Activated CD4-positive, alpha-beta T cell treated with anti-CD3 and anti-CD28 coated beads for 36 hours (primary cell): ENCODE measurements at regions of chr18 and their contacts with region 1.

Region 1: DNA sequence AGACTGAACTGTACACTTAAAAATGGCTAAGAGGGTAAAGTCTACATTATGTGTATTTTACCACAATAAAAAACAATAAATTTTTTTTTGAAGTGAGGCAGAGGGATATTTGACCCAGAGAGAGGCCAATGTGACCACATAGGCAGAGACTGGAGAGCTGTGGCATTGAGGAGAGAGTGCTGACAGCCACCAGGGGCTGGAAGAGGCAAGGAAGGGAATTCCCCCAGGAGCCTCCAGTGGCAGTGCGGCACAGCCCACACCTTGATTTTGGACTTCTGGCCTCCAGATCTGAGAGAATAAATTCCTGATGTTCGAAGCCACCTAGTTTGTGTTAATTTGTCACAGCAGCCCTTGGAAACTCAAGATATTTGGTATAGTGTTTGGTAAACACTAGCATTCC is 22.7 kb downstream of the ANKRD29 start:
- DNase-seq: no peak
- ATAC-seq: no peak
- H3K4me3 Mint-ChIP-seq: no peak overlapping the region
- H3K27ac Mint-ChIP-seq: no peak overlapping the region
- H3K4me1 Mint-ChIP-seq: peaks cover 4% of the 10 kb centered on the region
- H3K27me3 Mint-ChIP-seq: no peaks in the 10 kb centered on the region

Region 2: DNA sequence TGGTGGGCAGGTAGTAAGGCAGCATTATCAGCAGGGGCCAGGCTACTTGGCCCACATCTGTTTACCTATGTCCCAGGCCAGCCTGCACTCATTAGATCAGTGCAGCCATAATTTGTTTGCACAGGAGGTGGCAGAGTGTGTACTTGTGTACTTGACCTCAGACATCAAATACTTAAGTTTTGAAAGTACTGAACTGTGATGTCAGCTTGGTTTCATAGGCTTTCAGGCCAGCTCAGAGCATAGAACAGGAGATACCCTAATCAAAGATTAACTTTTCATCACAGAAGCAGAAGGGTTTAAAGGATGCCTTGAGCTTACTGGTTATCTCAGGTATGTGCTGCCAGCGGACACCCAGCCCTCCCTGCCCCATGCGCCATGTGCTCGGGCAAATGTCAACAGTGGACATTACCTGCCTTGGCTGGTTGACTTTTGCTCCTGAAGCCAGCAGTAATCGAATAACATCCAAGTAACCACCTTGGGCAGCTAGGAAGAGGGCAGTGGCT is 10.5 kb before region 1 on chr18:
- CTCF ChIA-PET with region 1: interaction called, 15 read pairs
- POLR2A ChIA-PET with region 1: no interaction called
- intact Hi-C with region 1: no loop called
- DNase-seq: no peak
- ATAC-seq: no peak
- H3K4me3 Mint-ChIP-seq: no peak overlapping the region
- H3K27ac Mint-ChIP-seq: no peak overlapping the region
- H3K4me1 Mint-ChIP-seq: peaks cover 9% of the 10 kb centered on the region
- H3K27me3 Mint-ChIP-seq: peaks cover 2% of the 10 kb centered on the region